CD4-positive, alpha-beta memory T cell (primary cell): ENCODE measurements at regions of chr13 and their contacts with region 1.

Region 1: DNA sequence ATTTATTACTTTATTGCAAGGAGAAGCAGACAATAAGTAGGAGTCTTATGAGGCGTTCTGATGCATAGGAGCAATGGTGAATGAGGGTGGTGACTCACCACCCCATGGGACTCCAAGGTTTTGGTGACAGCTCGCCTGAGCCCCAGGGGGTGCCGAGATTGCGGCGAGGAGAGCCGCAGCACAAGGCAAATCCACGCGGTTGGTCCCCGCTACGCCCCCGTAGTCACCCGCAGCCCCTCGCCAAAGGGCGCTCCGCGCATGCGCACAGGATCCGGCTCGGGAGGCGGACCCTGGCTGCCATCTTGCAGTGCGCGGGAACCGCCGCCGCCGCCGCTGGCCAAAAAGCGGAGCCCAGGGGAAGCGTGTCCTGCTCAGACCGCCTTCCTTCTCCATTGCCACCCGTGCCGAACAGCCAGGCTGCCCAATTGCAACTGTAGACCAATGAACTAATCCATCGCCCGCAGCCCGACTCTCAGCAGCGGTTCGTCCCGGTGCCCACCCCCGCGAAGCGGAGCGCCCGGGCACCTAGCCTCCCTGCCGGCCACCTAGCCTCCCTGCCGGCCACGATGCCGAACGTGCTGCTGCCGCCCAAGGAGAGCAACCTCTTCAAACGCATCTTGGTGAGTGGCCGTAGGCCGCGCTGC is at the start of gene NAA16:
- DNase-seq: peak; percentile 92 to 94 (median 93)
- H3K4me3 ChIP-seq: peak within 1 kb of the TSS; percentile 85 to 94
- H3K4me3 Mint-ChIP-seq: peak within 1 kb of the TSS; percentile 94 to 97 (median 96)
- H3K27ac ChIP-seq: peak within 1 kb of the TSS; percentile 83
- H3K27ac Mint-ChIP-seq: peak within 1 kb of the TSS; percentile 94 to 96 (median 96)
- H3K4me1 ChIP-seq: peaks cover 45% of the 10 kb centered on the region
- H3K4me1 Mint-ChIP-seq: peaks cover 22 to 46% (median 36%) of the 10 kb centered on the region in 4 donors
- H3K27me3 ChIP-seq: no peaks in the 10 kb centered on the region
- H3K27me3 Mint-ChIP-seq: no peaks in the 10 kb centered on the region
- total RNA-seq, gene NAA16: 62.3 to 62.5 TPM

Region 2: DNA sequence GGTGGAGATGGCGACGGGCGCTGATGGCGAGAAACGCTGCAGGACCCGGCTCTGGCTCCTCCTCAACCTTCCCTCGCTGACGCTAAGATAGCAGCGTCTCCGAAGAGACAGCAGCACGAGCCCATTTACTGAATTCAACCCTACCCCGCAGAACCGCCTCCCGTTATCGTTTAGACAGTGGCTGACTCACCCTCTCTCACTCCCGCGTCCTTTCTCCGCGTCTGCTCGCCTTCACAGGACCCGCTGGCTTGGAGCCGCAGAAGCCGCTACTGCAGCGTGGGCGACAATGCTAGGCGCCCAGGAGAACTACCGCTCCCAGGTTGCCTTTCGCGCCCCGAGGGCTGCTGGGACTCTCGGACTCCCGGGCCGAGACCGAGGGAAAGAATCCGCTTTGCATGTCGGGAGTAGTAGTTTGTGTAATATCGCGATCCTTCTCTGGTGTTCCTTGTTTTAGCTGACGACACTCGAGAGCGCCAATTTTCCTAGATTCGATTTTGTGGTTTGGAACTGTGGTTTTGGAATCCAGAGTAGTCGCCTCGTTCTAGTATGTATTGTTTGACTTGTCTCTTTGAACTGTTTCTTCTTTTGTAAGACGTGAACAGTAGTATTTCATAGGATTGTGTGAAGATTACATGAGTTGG is 178.5 kb before region 1 on chr13 and contains the start of gene KBTBD6:
- CTCF ChIA-PET with region 1: no interaction called
- POLR2A ChIA-PET with region 1: no interaction called
- intact Hi-C with region 1: loop called (anchors 5 kb)
- DNase-seq: peak; percentile 89 to 95 (median 90)
- H3K4me3 ChIP-seq: peak within 1 kb of the TSS; percentile 56
- H3K4me3 Mint-ChIP-seq: peak within 1 kb of the TSS; percentile 95 to 100 (median 99)
- H3K27ac ChIP-seq: peak within 1 kb of the TSS; percentile 63
- H3K27ac Mint-ChIP-seq: peak within 1 kb of the TSS; percentile 91 to 98 (median 98)
- H3K4me1 ChIP-seq: peaks cover 49% of the 10 kb centered on the region
- H3K4me1 Mint-ChIP-seq: peaks cover 39 to 55% (median 46%) of the 10 kb centered on the region in 4 donors
- H3K27me3 ChIP-seq: no peaks in the 10 kb centered on the region
- H3K27me3 Mint-ChIP-seq: no peaks in the 10 kb centered on the region
- total RNA-seq, gene KBTBD6: 9.9 to 10.5 TPM

Region 3: DNA sequence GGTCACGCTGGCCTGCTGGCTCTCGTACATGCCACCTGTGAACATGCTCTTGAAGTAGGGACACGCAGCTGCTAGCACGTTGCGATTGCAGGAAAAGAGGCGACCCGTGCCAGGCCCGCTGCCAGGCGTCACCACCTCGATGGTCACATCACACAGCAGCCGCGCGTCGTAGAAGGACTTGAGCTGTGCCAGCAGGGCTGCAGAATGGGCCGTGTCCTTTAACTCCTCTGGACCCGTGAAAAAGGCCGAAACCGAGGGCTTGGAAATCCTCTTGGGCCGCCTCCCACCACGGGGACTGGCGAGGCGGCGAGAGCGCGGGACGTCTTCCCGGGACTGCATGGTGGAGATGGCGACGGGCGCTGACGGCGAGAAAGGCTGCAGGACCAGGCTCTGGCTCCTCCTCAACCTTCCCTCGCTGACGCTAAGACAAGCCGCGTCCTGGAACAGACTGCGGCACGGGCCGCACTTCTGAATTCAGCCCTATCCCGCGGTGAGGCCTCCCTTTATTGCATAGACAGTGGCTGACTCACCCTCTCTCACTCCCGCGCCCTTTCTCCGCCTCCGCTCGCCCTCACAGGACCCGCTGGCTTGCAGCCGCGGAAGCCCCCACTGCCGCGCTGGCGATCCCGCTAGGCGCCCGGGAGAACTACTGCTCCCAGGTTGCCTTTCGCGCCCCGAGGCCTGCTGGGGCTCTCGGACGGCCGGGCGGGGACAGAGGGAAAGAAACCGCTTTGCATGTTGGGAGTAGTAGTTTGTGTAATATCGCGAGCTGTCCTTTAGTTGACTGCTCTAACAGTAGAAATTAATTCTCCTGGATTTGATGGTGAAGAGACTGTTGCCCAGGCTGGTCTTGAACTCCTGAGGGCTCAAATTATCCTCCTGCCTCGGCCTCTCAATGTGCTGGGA is 116.9 kb before region 1 on chr13 and contains the start of gene KBTBD7:
- CTCF ChIA-PET with region 1: no interaction called
- POLR2A ChIA-PET with region 1: no interaction called
- intact Hi-C with region 1: loop called (anchors 1 kb)
- DNase-seq: peak; percentile 83 to 90 (median 86)
- H3K4me3 ChIP-seq: peak within 1 kb of the TSS; percentile 18 to 94
- H3K4me3 Mint-ChIP-seq: peak within 1 kb of the TSS; percentile 93 to 97 (median 94)
- H3K27ac ChIP-seq: peak within 1 kb of the TSS; percentile 72
- H3K27ac Mint-ChIP-seq: peak within 1 kb of the TSS; percentile 72 to 97 (median 92)
- H3K4me1 ChIP-seq: peaks cover 29% of the 10 kb centered on the region
- H3K4me1 Mint-ChIP-seq: peaks cover 23 to 45% (median 33%) of the 10 kb centered on the region in 4 donors
- H3K27me3 ChIP-seq: no peaks in the 10 kb centered on the region
- H3K27me3 Mint-ChIP-seq: no peaks in the 10 kb centered on the region
- total RNA-seq, gene KBTBD7: 11.1 to 11.8 TPM

Region 4: DNA sequence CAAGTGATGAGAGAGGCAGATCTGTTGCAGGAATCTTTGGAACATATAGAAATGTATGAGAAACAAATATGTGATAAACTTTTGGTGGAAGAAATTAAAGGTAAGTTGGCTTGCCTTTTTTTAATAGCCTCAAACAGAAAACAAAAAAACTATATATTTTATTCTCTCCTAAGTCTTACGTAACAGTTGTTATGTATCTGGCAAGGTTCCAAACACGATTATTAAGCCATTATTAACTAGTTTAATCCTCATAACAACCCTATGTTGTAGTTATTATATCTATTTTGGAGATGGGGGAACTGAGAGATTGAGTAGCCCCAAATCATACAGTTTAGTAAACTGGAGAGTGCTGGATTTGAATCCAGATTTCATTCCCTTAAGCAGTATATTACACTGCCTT is 14.7 kb after region 1 on chr13:
- CTCF ChIA-PET with region 1: no interaction called
- POLR2A ChIA-PET with region 1: interaction called, 4 read pairs
- intact Hi-C with region 1: loop called (anchors 2 kb)
- DNase-seq: no peak
- H3K4me3 ChIP-seq: no peak overlapping the region
- H3K4me3 Mint-ChIP-seq: no peak overlapping the region
- H3K27ac ChIP-seq: no peak overlapping the region
- H3K27ac Mint-ChIP-seq: no peak overlapping the region
- H3K4me1 ChIP-seq: peaks cover 30% of the 10 kb centered on the region
- H3K4me1 Mint-ChIP-seq: peaks cover 18 to 40% (median 25%) of the 10 kb centered on the region in 4 donors
- H3K27me3 ChIP-seq: no peaks in the 10 kb centered on the region
- H3K27me3 Mint-ChIP-seq: no peaks in the 10 kb centered on the region

Region 5: GRCh38 chr13:42048682-42049453 is 737.8 kb after region 1 on chr13:
- CTCF ChIA-PET with region 1: no interaction called
- POLR2A ChIA-PET with region 1: no interaction called
- intact Hi-C with region 1: loop called (anchors 5 kb)
- DNase-seq: peak; percentile 51 to 71 (median 57)
- H3K4me3 ChIP-seq: peak overlapping the region; percentile 45 to 76
- H3K4me3 Mint-ChIP-seq: peak overlapping the region; percentile 82 to 93 (median 89)
- H3K27ac ChIP-seq: peak overlapping the region; percentile 53
- H3K27ac Mint-ChIP-seq: peak overlapping the region in 4 of 7 donors; percentile 61 to 88 (median 74)
- H3K4me1 ChIP-seq: peaks cover 12% of the 10 kb centered on the region
- H3K4me1 Mint-ChIP-seq: peaks cover 17 to 25% (median 19%) of the 10 kb centered on the region in 4 donors
- H3K27me3 ChIP-seq: no peaks in the 10 kb centered on the region
- H3K27me3 Mint-ChIP-seq: no peaks in the 10 kb centered on the region